A549 (cell line): ENCODE measurements at regions of chr22 and their contacts with region 1.

Region 1: GRCh38 chr22:41517172-41518047 is 26.9 kb downstream of the POLR3H start:
- DNase-seq: peak; percentile 48 to 63
- ATAC-seq: peak; percentile 43 to 68
- H3K4me3 ChIP-seq: no peak overlapping the region
- H3K27ac ChIP-seq: no peak overlapping the region; a peak in 1 of 6 replicates
- H3K4me1 ChIP-seq: peaks cover 11% of the 10 kb centered on the region
- CTCF ChIP-seq: peak; percentile 70
- EP300 ChIP-seq: no peak
- POLR2A ChIP-seq: no peak
- RAD21 ChIP-seq: peak; percentile 81 to 91

Region 2: GRCh38 chr22:40922484-40923303 is 594.7 kb before region 1 on chr22:
- CTCF ChIA-PET with region 1: interaction called, 11 read pairs
- POLR2A ChIA-PET with region 1: no interaction called
- DNase-seq: peak; percentile 20 to 47
- ATAC-seq: peak; percentile 59 to 77; a peak in 3 of 6 replicates
- H3K4me3 ChIP-seq: no peak overlapping the region
- H3K27ac ChIP-seq: no peak overlapping the region
- H3K4me1 ChIP-seq: no peaks in the 10 kb centered on the region
- CTCF ChIP-seq: peak; percentile 62
- EP300 ChIP-seq: no peak
- POLR2A ChIP-seq: no peak
- RAD21 ChIP-seq: peak; percentile 67 to 71

Region 3: GRCh38 chr22:41204992-41205900 is 312.2 kb before region 1 on chr22 and contains the start of gene L3MBTL2:
- CTCF ChIA-PET with region 1: no interaction called
- POLR2A ChIA-PET with region 1: no interaction called
- DNase-seq: peak; percentile 92 to 96
- ATAC-seq: peak; percentile 100
- H3K4me3 ChIP-seq: peak within 1 kb of the TSS; percentile 72
- H3K27ac ChIP-seq: peak within 1 kb of the TSS; percentile 85 to 88
- H3K4me1 ChIP-seq: no peaks in the 10 kb centered on the region
- CTCF ChIP-seq: no peak
- EP300 ChIP-seq: no peak
- POLR2A ChIP-seq: peak; percentile 71
- RAD21 ChIP-seq: no peak
- polyA plus RNA-seq, gene L3MBTL2: 17.0 and 17.3 TPM in 2 replicates

Region 4: DNA sequence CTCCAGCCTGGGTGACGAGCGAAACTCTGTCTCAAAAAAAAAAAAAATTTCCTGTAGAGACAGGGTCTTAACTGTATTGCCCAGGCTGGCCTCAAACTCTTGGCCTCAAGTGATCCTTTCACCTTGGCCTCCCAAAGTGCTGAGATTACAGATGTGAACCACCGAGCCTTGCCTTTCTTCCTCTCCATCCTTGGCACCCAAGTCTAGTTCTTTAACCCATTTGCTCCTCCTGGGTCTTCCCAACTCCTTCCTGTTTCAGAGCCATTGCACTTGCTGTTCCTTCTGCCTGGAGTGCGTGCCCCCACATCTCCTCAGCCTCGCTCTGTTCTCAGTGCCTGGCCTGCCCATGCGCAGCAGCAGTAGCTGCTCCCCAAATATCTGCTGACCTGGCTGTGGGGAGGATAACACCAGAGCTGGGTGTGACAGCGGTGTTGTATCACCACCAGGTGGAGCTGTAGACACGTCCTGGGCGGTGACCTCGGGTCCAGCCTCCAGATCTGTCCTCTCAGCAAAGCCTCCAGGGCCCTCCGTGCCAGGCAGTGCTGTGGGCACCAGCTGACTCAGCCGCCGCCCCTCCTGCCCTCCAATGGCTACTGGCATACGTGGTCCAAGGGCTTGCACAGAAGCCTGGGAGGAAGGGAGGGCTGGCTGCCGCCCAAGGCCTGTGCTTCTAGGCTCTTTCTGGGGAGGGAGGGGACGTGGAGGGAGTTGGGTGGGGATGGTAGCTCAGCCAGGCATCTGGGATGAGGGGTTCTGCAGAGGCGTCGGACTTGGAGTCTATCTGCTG is 113.7 kb before region 1 on chr22:
- CTCF ChIA-PET with region 1: interaction called, 196 read pairs
- POLR2A ChIA-PET with region 1: interaction called, 4 read pairs
- DNase-seq: peak; percentile 86 to 96
- ATAC-seq: peak; percentile 93 to 99
- H3K4me3 ChIP-seq: no peak overlapping the region
- H3K27ac ChIP-seq: peak overlapping the region; percentile 40 to 91; a peak in 4 of 6 replicates
- H3K4me1 ChIP-seq: peaks cover 13% of the 10 kb centered on the region
- CTCF ChIP-seq: peak; percentile 79
- EP300 ChIP-seq: no peak
- POLR2A ChIP-seq: no peak
- RAD21 ChIP-seq: peak; percentile 85 to 92

Region 5: DNA sequence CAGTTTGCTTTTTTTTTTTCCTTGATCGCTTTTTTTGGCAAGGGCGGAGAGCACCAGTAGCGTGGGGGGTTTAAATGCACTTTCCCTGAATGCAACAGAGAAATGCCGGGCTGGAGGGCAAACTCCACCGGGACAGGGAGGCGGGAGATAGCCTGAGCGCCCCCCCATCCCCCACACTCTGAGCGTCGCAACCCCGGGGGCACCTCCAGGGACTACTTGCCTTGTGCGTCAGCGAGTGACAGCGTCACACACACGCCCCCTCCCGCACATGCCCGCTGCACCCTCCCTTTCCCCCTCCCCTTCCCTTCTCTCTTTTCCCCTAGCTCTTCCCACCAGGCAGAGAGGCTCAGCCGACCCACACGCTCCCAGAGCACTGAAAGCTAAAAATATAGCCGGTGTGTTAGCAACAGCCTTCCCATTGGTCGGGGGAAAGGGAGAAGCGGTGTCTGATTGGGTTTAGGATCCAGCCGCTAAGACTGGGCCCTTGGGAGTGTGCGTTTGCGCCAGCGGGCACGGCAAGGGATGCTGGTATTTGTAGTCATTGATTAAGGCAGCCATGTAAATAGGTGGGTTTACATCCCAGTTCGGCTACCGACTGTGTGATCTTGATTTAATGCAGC is 69.1 kb before region 1 on chr22:
- CTCF ChIA-PET with region 1: interaction called, 11 read pairs
- POLR2A ChIA-PET with region 1: no interaction called
- DNase-seq: peak; percentile 87 to 98
- ATAC-seq: peak; percentile 76 to 85
- H3K4me3 ChIP-seq: peak overlapping the region; percentile 96
- H3K27ac ChIP-seq: peak overlapping the region; percentile 100
- H3K4me1 ChIP-seq: peaks cover 10% of the 10 kb centered on the region
- CTCF ChIP-seq: no peak
- EP300 ChIP-seq: no peak
- POLR2A ChIP-seq: no peak; the same call in 1 of the 2 replicates
- RAD21 ChIP-seq: no peak

Region 6: GRCh38 chr22:41468381-41469217 is 48.8 kb before region 1 on chr22 and contains the starts of genes ACO2 and PHF5A:
- CTCF ChIA-PET with region 1: interaction called, 23 read pairs
- POLR2A ChIA-PET with region 1: no interaction called
- DNase-seq: peak; percentile 92 to 96
- ATAC-seq: peak; percentile 96
- H3K4me3 ChIP-seq: peak within 1 kb of the TSS; percentile 74
- H3K27ac ChIP-seq: peak within 1 kb of the TSS; percentile 93 to 95
- H3K4me1 ChIP-seq: peaks cover 15% of the 10 kb centered on the region
- CTCF ChIP-seq: no peak
- EP300 ChIP-seq: no peak
- POLR2A ChIP-seq: peak; percentile 50
- RAD21 ChIP-seq: no peak
- polyA plus RNA-seq, gene ACO2: 30.7 and 32.8 TPM in 2 replicates
- polyA plus RNA-seq, gene PHF5A: 69.4 and 82.6 TPM in 2 replicates

Region 7: DNA sequence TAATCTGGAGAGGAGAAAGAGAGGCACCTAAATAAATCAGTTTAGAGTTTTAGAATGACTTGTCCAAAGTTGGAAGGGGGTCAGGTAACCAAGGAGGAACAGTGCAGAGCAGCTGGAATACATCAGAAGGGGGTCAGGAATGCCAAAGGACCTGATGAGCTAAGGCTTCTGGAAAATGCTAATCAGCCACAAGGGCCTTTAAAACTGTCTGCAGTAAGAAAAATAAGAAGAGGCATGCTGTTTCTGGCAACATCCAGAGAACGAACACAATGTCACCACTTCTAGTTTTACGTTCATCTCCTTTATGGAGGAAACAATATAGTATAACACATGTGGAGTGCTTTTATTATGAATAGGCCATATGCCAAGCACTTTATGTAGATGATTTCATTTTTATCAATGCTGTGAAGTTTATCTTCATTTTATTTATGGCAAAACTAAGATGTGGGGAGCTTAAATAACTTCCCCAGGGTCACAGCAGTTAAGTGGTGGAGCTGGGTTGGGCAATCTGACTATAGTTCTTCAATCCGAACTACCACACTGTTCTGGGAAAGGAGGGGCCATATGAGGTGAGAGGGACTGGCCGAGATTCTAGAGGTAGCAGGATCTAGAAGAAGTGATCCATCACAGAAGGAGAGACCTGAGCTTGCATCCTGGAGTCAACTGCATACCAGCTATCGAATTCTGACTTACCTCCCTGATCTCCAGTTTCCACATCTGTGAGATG is 25.9 kb before region 1 on chr22:
- CTCF ChIA-PET with region 1: interaction called, 38 read pairs
- POLR2A ChIA-PET with region 1: no interaction called
- DNase-seq: no peak
- ATAC-seq: no peak
- H3K4me3 ChIP-seq: no peak overlapping the region
- H3K27ac ChIP-seq: no peak overlapping the region
- H3K4me1 ChIP-seq: no peaks in the 10 kb centered on the region
- CTCF ChIP-seq: no peak
- EP300 ChIP-seq: no peak
- POLR2A ChIP-seq: no peak
- RAD21 ChIP-seq: no peak